ENCODE measurements at regions of chr15 and their contacts with region 1.

Region 1: GRCh38 chr15:33700695-33701304 is 267.5 kb upstream of the CHRM5 start:
- DNase-seq: peak; percentile 58 to 85
- ATAC-seq: peak; percentile 92 to 97
- H3K4me3 ChIP-seq: no peak overlapping the region
- H3K27ac ChIP-seq: no peak overlapping the region
- H3K4me1 ChIP-seq: no peaks in the 10 kb centered on the region
- CTCF ChIP-seq: peak; percentile 95
- EP300 ChIP-seq: no peak
- POLR2A ChIP-seq: no peak
- RAD21 ChIP-seq: peak; percentile 88 to 89

Region 2: DNA sequence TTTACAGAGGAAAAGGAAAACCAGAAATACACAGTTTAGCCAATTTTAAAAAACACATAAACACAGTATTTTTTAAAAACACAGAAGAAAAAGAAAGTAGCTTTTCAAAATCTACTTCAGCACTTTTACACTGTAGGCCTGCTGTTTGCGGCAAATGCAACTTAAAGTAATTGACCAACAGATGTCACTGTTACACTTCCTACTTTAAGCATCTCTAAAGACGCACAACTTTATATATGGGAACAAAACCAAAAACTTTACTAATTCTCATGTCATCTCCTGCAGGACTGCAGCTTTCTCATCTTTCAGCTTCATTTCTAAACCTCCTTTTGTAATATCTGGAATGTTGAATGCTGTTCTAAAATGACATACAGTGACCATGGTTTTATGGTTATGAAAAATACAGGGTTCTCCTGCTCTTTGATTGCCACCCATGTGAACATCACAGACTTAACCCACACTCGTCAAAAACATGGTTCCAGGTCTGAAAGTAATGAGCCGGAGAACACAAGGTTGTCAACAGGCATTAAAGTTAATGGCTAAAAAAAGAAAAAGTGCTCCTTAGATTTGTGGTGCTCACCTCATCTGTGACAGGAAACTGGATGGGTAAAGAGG is 614.2 kb before region 1 on chr15:
- CTCF ChIA-PET with region 1: interaction called, 15 read pairs
- POLR2A ChIA-PET with region 1: no interaction called
- DNase-seq: peak; percentile 40 to 71
- ATAC-seq: peak; percentile 84 to 92; a peak in 5 of 6 replicates
- H3K4me3 ChIP-seq: no peak overlapping the region
- H3K27ac ChIP-seq: no peak overlapping the region
- H3K4me1 ChIP-seq: no peaks in the 10 kb centered on the region
- CTCF ChIP-seq: peak; percentile 88
- EP300 ChIP-seq: no peak
- POLR2A ChIP-seq: no peak
- RAD21 ChIP-seq: peak; percentile 84

Region 3: DNA sequence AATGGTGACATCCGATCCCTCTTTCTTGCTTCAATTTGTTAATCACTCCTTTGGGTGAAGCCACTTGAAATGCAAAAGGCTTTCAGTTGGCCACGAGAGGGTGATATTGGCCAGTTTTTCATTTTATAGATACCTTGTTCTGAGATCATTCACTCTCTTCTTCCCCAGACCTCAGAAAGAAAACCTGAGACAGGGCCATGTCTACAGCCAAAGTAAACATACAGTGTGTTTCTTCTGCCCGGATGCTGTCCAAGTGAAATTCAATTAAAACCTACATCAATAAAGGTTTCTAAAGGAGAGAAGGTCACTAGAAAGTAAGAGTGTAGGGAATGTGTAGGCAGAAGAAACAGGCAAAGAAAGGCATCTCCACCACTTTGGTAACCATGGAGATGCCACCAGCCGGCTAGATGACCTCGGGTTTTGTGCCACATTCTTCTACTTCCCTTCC is 466.8 kb before region 1 on chr15:
- CTCF ChIA-PET with region 1: interaction called, 99 read pairs
- POLR2A ChIA-PET with region 1: no interaction called
- DNase-seq: peak; percentile 55 to 65
- ATAC-seq: peak; percentile 84 to 93
- H3K4me3 ChIP-seq: no peak overlapping the region
- H3K27ac ChIP-seq: no peak overlapping the region
- H3K4me1 ChIP-seq: no peaks in the 10 kb centered on the region
- CTCF ChIP-seq: peak; percentile 87
- EP300 ChIP-seq: no peak
- POLR2A ChIP-seq: no peak
- RAD21 ChIP-seq: peak; percentile 90 to 95

Region 4: GRCh38 chr15:33278816-33279612 is 421.8 kb before region 1 on chr15:
- CTCF ChIA-PET with region 1: interaction called, 18 read pairs
- POLR2A ChIA-PET with region 1: no interaction called
- DNase-seq: peak; percentile 80 to 88
- ATAC-seq: peak; percentile 96 to 98
- H3K4me3 ChIP-seq: no peak overlapping the region
- H3K27ac ChIP-seq: peak overlapping the region; percentile 74 to 88
- H3K4me1 ChIP-seq: peaks cover 21% of the 10 kb centered on the region
- CTCF ChIP-seq: no peak
- EP300 ChIP-seq: peak in 1 of 2 experiments; percentile 25; a peak in 1 of 5 replicates
- POLR2A ChIP-seq: no peak
- RAD21 ChIP-seq: no peak; a peak in 1 of 5 replicates

Region 5: DNA sequence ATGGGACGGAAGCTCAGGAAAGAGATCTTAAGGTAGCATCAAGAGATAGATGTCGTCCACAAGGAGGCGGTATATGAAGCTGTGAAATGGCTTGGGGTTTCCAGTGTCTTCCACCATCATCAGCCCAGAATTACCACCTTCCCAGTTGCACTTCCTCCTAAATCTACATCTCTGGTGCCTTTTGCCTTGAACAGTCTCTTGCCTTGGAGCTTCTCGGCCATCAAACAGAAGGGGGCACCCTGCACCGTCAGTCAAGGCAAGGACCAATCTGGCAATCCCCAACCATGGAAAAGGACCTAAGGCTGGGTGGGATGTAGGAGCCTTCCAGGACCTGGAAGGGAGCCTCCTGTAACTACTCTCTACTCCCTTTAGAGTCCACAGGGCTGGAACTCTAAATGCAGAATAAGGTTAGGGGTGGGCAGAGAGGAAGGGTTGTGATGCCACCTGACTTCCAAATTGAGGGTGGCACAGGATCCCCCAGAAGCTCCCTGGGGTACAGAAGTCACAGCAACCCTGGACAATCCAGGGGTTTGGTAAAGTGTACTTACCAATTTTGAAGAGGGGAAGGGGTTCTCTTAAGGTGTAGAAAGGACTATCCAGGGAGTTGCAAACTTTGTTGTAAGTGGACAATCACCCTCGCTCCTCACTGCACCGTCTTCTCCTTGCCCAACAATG is 391.1 kb before region 1 on chr15:
- CTCF ChIA-PET with region 1: interaction called, 37 read pairs
- POLR2A ChIA-PET with region 1: no interaction called
- DNase-seq: peak in 1 of 2 experiments; percentile 46
- ATAC-seq: peak in 1 of 2 experiments; percentile 67; a peak in 3 of 6 replicates
- H3K4me3 ChIP-seq: no peak overlapping the region
- H3K27ac ChIP-seq: no peak overlapping the region
- H3K4me1 ChIP-seq: no peaks in the 10 kb centered on the region; the same call in 2 of the 3 replicates
- CTCF ChIP-seq: peak; percentile 14; the same call in 1 of the 3 replicates
- EP300 ChIP-seq: no peak
- POLR2A ChIP-seq: no peak
- RAD21 ChIP-seq: peak in 1 of 2 experiments; percentile 44; a peak in 2 of 5 replicates

Region 6: GRCh38 chr15:33565094-33565493 is 135.7 kb before region 1 on chr15:
- CTCF ChIA-PET with region 1: no interaction called
- POLR2A ChIA-PET with region 1: no interaction called
- DNase-seq: no peak
- ATAC-seq: no peak
- H3K4me3 ChIP-seq: no peak overlapping the region
- H3K27ac ChIP-seq: no peak overlapping the region
- H3K4me1 ChIP-seq: no peaks in the 10 kb centered on the region
- CTCF ChIP-seq: no peak
- EP300 ChIP-seq: no peak
- POLR2A ChIP-seq: no peak
- RAD21 ChIP-seq: no peak

Region 7: GRCh38 chr15:33716025-33716424 is 15.2 kb after region 1 on chr15:
- CTCF ChIA-PET with region 1: interaction called, 49 read pairs
- POLR2A ChIA-PET with region 1: no interaction called
- DNase-seq: no peak
- ATAC-seq: no peak
- H3K4me3 ChIP-seq: no peak overlapping the region
- H3K27ac ChIP-seq: no peak overlapping the region
- H3K4me1 ChIP-seq: peaks cover 2% of the 10 kb centered on the region; the same call in 1 of the 3 replicates
- CTCF ChIP-seq: no peak
- EP300 ChIP-seq: no peak
- POLR2A ChIP-seq: no peak
- RAD21 ChIP-seq: no peak

Region 8: DNA sequence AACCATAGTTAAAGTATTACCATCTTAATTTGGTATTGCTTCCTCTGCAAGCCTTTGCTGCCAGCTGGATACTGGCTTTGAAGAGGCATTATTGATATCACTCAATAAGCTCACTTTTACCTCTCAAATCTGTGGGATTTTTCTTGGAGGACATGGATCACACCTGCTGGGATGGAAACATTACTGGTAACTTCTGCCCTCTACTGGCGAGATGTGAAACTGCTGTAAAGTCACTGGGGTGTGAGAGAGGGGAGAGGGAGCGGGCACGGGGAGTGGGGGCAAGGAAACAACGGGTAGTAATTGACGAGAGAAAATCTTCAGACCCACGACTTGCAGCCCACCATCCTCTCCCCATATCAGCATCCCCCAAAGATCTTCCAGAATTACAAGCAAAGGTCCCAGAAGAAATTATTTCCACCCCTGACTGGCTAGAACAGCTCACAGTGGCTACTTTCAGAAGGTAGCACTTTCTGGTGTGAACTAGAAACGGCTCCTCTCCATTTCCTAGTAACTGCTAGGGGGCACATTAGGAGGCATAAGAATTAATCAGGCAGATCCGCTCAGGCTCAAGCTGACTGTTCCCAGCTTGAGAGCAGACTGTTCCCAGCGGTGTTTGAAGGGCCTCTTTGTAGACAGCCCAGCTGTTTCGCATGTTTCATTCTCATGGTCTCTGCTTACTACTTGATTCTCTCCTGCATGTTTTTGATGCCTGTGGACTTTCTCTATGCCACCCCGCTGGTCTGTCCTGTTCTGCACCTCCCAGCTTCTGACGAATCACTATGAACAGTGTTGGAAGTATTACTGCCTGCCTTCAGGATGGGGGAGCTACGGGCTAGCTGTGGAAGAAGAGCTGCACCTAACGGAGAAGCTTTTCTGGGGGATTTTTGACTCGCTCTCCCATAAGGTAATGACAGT is 37.1 kb after region 1 on chr15:
- CTCF ChIA-PET with region 1: interaction called, 55 read pairs
- POLR2A ChIA-PET with region 1: no interaction called
- DNase-seq: peak; percentile 29 to 80
- ATAC-seq: peak; percentile 84 to 94
- H3K4me3 ChIP-seq: no peak overlapping the region
- H3K27ac ChIP-seq: no peak overlapping the region
- H3K4me1 ChIP-seq: no peaks in the 10 kb centered on the region
- CTCF ChIP-seq: peak; percentile 75
- EP300 ChIP-seq: no peak
- POLR2A ChIP-seq: no peak
- RAD21 ChIP-seq: peak; percentile 53 to 58

Region 9: GRCh38 chr15:34014556-34014955 is 313.8 kb after region 1 on chr15:
- CTCF ChIA-PET with region 1: no interaction called
- POLR2A ChIA-PET with region 1: no interaction called
- DNase-seq: no peak
- ATAC-seq: no peak
- H3K4me3 ChIP-seq: no peak overlapping the region
- H3K27ac ChIP-seq: no peak overlapping the region
- H3K4me1 ChIP-seq: no peaks in the 10 kb centered on the region
- CTCF ChIP-seq: no peak
- EP300 ChIP-seq: no peak
- POLR2A ChIP-seq: no peak
- RAD21 ChIP-seq: no peak